GM12878 (cell line): ENCODE measurements at regions of chr7 and their contacts with region 1.

Region 1: GRCh38 chr7:111741811-111742240 is 179.5 kb upstream of the IMMP2L start:
- DNase-seq: peak; percentile 31
- ATAC-seq: peak; percentile 97
- H3K4me3 ChIP-seq: no peak overlapping the region
- H3K27ac ChIP-seq: no peak overlapping the region
- H3K4me1 ChIP-seq: no peaks in the 10 kb centered on the region
- H3K27me3 ChIP-seq: no peaks in the 10 kb centered on the region
- CTCF ChIP-seq: peak; percentile 63 to 82 (median 68)
- EP300 ChIP-seq: no peak
- POLR2A ChIP-seq: no peak
- RAD21 ChIP-seq: peak; percentile 74

Region 2: GRCh38 chr7:111730476-111731300 is 11.1 kb before region 1 on chr7:
- CTCF ChIA-PET with region 1: interaction called, 13 read pairs
- POLR2A ChIA-PET with region 1: no interaction called
- RAD21 ChIA-PET with region 1: interaction called, 3 read pairs
- SMC1A ChIA-PET with region 1: interaction called, 8 read pairs
- in situ Hi-C with region 1: no loop called
- intact Hi-C with region 1: no loop called
- DNase-seq: no peak
- ATAC-seq: peak; percentile 88
- H3K4me3 ChIP-seq: no peak overlapping the region
- H3K27ac ChIP-seq: no peak overlapping the region
- H3K4me1 ChIP-seq: no peaks in the 10 kb centered on the region
- H3K27me3 ChIP-seq: no peaks in the 10 kb centered on the region
- CTCF ChIP-seq: peak; percentile 55 to 60 (median 57)
- EP300 ChIP-seq: no peak
- POLR2A ChIP-seq: no peak
- RAD21 ChIP-seq: peak; percentile 82

Region 3: DNA sequence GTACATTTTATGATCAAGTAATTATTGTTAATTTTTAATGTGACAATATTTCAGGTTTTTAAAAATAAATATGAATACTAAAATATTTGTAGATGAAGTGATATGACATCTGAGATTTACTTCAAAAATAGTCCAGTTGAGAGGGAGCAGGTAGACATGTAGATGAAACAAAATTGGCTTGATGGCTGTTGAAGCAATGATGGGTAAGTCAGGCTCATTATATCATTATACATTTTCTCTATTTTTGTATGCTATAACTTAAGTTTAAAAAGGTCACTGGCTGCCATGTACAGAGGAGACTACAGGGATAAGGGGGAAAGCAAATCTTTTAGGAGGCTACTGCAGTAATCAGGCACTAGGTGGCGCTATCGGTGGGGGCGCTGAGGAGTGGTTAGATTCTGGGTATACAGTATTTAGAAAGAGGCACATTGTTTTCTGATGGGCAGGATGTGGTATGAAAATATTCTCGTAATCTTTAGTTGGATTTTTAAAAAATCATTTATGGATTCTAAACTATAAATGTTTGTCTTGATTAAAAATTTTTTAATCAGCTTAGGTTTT is 10.3 kb after region 1 on chr7:
- CTCF ChIA-PET with region 1: interaction called, 10 read pairs
- POLR2A ChIA-PET with region 1: no interaction called
- RAD21 ChIA-PET with region 1: interaction called, 7 read pairs
- SMC1A ChIA-PET with region 1: interaction called, 11 read pairs
- in situ Hi-C with region 1: no loop called
- intact Hi-C with region 1: no loop called
- DNase-seq: no peak
- ATAC-seq: peak; percentile 96
- H3K4me3 ChIP-seq: no peak overlapping the region
- H3K27ac ChIP-seq: no peak overlapping the region
- H3K4me1 ChIP-seq: no peaks in the 10 kb centered on the region
- H3K27me3 ChIP-seq: no peaks in the 10 kb centered on the region
- CTCF ChIP-seq: peak; percentile 61 to 88 (median 81)
- EP300 ChIP-seq: no peak
- POLR2A ChIP-seq: no peak
- RAD21 ChIP-seq: peak; percentile 69

Region 4: DNA sequence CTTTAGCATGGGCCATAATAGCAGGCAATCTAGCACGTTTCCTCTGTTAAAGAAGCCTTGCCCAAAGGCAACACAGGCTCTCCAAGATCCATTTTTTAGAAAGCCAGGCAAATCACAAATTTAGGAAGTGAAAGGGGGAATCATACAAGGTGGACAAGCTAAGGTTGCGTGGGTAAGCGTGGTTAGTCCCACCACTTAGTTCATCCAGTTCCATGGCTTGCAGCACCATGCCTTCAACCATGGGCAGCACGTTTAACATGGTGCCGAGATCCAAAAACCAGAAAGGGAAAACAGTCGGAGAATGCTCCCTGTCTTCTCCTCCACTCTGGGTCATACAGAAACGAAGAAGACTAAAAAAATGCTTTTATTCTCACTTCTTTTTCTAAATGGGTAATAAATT is 54.8 kb after region 1 on chr7:
- CTCF ChIA-PET with region 1: no interaction called
- POLR2A ChIA-PET with region 1: no interaction called
- RAD21 ChIA-PET with region 1: no interaction called
- SMC1A ChIA-PET with region 1: no interaction called
- in situ Hi-C with region 1: no loop called
- intact Hi-C with region 1: no loop called
- DNase-seq: no peak
- ATAC-seq: no peak
- H3K4me3 ChIP-seq: no peak overlapping the region
- H3K27ac ChIP-seq: no peak overlapping the region
- H3K4me1 ChIP-seq: no peaks in the 10 kb centered on the region
- H3K27me3 ChIP-seq: no peaks in the 10 kb centered on the region
- CTCF ChIP-seq: no peak
- EP300 ChIP-seq: no peak
- POLR2A ChIP-seq: no peak
- RAD21 ChIP-seq: no peak

Region 5: GRCh38 chr7:111855161-111855856 is 113.5 kb after region 1 on chr7:
- CTCF ChIA-PET with region 1: interaction called, 12 read pairs
- POLR2A ChIA-PET with region 1: no interaction called
- RAD21 ChIA-PET with region 1: no interaction called
- SMC1A ChIA-PET with region 1: interaction called, 6 read pairs
- in situ Hi-C with region 1: no loop called
- intact Hi-C with region 1: loop called (anchors 1 kb)
- DNase-seq: peak; percentile 2
- ATAC-seq: peak; percentile 90
- H3K4me3 ChIP-seq: no peak overlapping the region
- H3K27ac ChIP-seq: no peak overlapping the region
- H3K4me1 ChIP-seq: no peaks in the 10 kb centered on the region
- H3K27me3 ChIP-seq: no peaks in the 10 kb centered on the region
- CTCF ChIP-seq: peak; percentile 48 to 54 (median 50); a peak in 5 of 6 replicates
- EP300 ChIP-seq: no peak
- POLR2A ChIP-seq: no peak
- RAD21 ChIP-seq: peak; percentile 36

Region 6: GRCh38 chr7:112414855-112415490 is 673.1 kb after region 1 on chr7:
- CTCF ChIA-PET with region 1: interaction called, 4 read pairs
- POLR2A ChIA-PET with region 1: no interaction called
- RAD21 ChIA-PET with region 1: no interaction called
- SMC1A ChIA-PET with region 1: no interaction called
- in situ Hi-C with region 1: loop called (anchors 10 kb)
- intact Hi-C with region 1: loop called (anchors 5 kb)
- DNase-seq: no peak
- ATAC-seq: peak; percentile 64
- H3K4me3 ChIP-seq: no peak overlapping the region
- H3K27ac ChIP-seq: no peak overlapping the region
- H3K4me1 ChIP-seq: no peaks in the 10 kb centered on the region
- H3K27me3 ChIP-seq: no peaks in the 10 kb centered on the region; a peak in 1 of 4 replicates
- CTCF ChIP-seq: peak; percentile 34 to 44 (median 43); a peak in 5 of 6 replicates
- EP300 ChIP-seq: no peak
- POLR2A ChIP-seq: no peak
- RAD21 ChIP-seq: peak; percentile 49

Region 7: GRCh38 chr7:112495810-112496462 is 754.1 kb after region 1 on chr7:
- CTCF ChIA-PET with region 1: interaction called, 21 read pairs
- POLR2A ChIA-PET with region 1: no interaction called
- RAD21 ChIA-PET with region 1: interaction called, 4 read pairs
- SMC1A ChIA-PET with region 1: interaction called, 5 read pairs
- in situ Hi-C with region 1: loop called (anchors 5 kb)
- intact Hi-C with region 1: loop called (anchors 2 kb)
- DNase-seq: no peak
- ATAC-seq: peak; percentile 83
- H3K4me3 ChIP-seq: no peak overlapping the region
- H3K27ac ChIP-seq: no peak overlapping the region
- H3K4me1 ChIP-seq: no peaks in the 10 kb centered on the region; the same call in 1 of the 2 replicates
- H3K27me3 ChIP-seq: no peaks in the 10 kb centered on the region
- CTCF ChIP-seq: peak; percentile 49 to 74 (median 60); a peak in 5 of 6 replicates
- EP300 ChIP-seq: no peak
- POLR2A ChIP-seq: no peak
- RAD21 ChIP-seq: peak; percentile 89